ENCODE measurements at regions of chr5 and their contacts with region 1.

Region 1: GRCh38 chr5:14156650-14157493 is 13.7 kb downstream of the TRIO start:
- DNase-seq: peak; percentile 64
- CTCF ChIP-seq: no peak

Region 2: GRCh38 chr5:14142827-14143548 is 13.9 kb before region 1 on chr5 and contains the start of gene TRIO:
- CTCF ChIA-PET with region 1: interaction called, 13 read pairs
- POLR2A ChIA-PET with region 1: interaction called, 8 read pairs
- DNase-seq: peak; percentile 91
- CTCF ChIP-seq: peak; percentile 42

Region 3: DNA sequence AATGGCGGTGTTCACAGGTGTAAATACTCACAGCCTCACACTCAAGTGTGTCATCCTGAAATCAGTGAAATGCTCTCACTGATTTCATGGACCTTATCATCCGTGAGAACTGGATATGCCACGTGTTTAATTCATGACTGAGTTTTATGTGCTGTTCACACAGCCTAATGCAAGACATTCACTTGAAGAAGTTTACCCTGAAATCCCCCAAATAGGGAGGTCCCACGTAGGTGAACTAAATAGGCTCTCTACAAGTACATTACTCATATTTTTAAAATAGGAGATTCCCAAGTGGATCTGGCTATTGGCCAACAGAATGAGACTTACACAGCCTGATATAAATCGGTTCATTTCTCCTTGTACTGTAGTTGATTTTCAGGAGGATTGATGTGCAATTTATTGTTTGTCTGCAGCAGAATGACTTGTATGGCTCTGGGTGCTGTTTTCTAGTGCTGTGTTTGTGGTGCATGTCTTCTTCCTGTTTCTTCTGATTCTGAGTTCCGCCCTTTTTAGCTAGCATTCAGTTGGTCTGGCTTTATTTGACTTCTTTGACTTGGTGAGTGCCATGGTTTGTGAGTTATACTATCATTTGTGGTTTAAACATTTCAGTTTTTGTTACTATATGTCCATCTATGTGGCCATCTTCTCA is 11.4 kb after region 1 on chr5:
- CTCF ChIA-PET with region 1: interaction called, 21 read pairs
- POLR2A ChIA-PET with region 1: interaction called, 6 read pairs
- DNase-seq: no peak
- CTCF ChIP-seq: no peak

Measured in GM10248 (cell line).